HEK293 (cell line): ENCODE measurements at regions of chr1 and their contacts with region 1.

Region 1: GRCh38 chr1:153532769-153533599 is 2.8 kb downstream of the S100A6 start:
- H3K4me3 ChIP-seq: no peak overlapping the region
- H3K27ac ChIP-seq: no peak overlapping the region
- H3K4me1 ChIP-seq: no peaks in the 10 kb centered on the region
- CTCF ChIP-seq: no peak

Region 2: DNA sequence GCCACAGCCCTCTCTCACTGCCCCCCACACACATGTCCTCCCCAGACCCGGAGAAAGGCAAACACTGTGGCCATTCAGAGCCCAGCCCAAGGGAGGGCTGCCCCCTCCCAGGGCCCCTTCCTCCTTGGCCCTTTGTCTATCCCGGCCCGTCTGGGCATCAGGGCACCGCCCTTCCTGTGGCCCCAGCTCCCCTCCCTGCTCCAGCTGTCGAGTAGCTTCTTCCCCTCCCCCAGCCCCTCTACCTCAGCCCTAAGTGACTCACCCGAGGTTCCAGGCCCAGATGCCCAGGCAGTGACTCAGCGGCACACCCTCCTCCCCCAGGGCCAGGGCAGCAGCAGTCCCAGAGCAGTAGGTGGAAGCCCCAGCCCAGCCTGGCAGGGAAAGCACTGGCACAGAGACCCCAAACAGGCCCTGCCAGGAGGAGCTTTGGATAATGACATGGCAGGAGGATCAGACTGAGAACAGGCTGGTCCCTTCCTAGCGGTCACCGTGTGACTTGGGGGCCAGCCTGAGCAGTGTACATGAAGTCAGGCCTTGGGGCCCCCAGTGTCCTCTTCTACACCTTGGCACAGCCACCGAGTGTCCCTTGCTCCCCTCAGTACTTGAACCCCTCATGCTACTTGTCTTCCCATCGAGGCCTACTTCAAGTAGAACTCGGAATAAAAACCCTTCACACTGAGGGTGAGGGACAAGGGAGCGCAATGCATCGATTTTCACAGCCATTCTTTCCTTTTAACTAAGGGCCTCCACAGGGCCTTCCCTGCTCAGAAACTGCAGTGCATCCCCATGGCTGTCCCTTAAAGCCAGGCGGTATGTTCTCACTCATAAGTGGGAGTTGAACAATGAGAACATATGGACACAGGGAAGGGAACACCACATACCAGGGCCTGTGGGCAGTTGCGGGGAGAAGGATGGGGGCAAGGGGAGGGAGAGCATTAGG is 33.7 kb after region 1 on chr1:
- CTCF ChIA-PET with region 1: interaction called, 55 read pairs
- POLR2A ChIA-PET with region 1: interaction called, 11 read pairs
- H3K4me3 ChIP-seq: no peak overlapping the region
- H3K27ac ChIP-seq: peak overlapping the region; percentile 77
- H3K4me1 ChIP-seq: peaks cover 7% of the 10 kb centered on the region
- CTCF ChIP-seq: no peak

Region 3: GRCh38 chr1:153572569-153573015 is 39.6 kb after region 1 on chr1:
- CTCF ChIA-PET with region 1: interaction called, 55 read pairs
- POLR2A ChIA-PET with region 1: interaction called, 4 read pairs
- H3K4me3 ChIP-seq: no peak overlapping the region
- H3K27ac ChIP-seq: no peak overlapping the region
- H3K4me1 ChIP-seq: no peaks in the 10 kb centered on the region
- CTCF ChIP-seq: peak; percentile 69; the same call in 1 of the 2 replicates